Body of pancreas (tissue), 4 donors: ENCODE measurements at regions of chr7 and their contacts with region 1.

Region 1: DNA sequence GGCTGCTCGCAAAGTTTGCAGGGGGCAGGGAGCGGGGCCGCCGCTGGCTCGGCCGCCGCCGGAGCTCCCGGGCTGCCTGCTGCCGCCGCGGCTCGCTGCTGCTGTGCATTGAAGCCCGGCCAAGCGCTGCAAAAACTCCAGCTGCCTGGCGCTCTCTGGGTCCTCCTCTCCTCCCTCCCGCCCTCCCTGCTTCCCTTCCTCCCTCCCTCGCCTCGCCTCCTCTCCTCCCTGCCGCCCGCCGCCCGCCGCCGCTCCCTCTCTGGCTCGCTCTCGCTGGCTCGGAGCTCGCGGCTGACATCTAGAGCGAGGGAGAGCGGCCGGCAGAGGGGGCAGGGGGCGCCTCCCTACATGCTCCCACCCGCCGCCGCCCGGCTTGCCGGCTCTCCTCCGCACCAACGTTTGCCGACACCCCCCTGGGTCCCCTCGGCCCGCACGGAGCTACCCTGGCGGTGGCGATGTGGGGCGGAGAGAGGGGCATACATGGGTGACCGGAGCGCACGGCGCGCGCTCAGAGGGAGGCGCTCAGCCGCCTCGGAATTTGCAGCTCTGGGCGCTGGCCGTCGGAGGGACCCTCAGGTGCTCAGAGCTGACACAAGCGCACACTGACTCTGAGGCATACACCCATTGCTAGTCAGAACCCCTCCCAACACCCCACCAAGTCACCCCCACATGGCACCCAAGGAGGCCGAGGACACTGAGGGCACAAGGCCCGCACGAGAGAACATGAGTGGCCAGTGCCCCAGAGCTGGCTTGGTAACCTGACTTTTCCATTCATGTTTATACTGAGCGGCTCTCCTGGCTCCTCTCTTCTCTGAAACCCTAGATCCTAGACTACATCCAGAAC is 1.2 kb upstream of the PLXNA4 start:
- DNase-seq: peak; percentile 35 to 62 (median 46)
- ATAC-seq: peak; percentile 64
- H3K4me3 ChIP-seq: no peak overlapping the region
- H3K27ac ChIP-seq: no peak overlapping the region
- H3K4me1 ChIP-seq: peaks cover 17% of the 10 kb centered on the region
- H3K27me3 ChIP-seq: peaks cover 0 to 27% of the 10 kb centered on the region in 2 donors
- CTCF ChIP-seq: no peak
- POLR2A ChIP-seq: peak in 1 of 3 donors; percentile 12

Region 2: GRCh38 chr7:131945313-131945911 is 632.0 kb before region 1 on chr7:
- intact Hi-C with region 1: loop called (anchors 5 kb)
- DNase-seq: peak; percentile 29 to 62 (median 43)
- ATAC-seq: peak; percentile 58
- H3K4me3 ChIP-seq: no peak overlapping the region
- H3K27ac ChIP-seq: no peak overlapping the region
- H3K4me1 ChIP-seq: peaks cover 8% of the 10 kb centered on the region
- H3K27me3 ChIP-seq: peaks cover 0 to 10% of the 10 kb centered on the region in 2 donors
- CTCF ChIP-seq: peak; percentile 68 to 92 (median 79)
- POLR2A ChIP-seq: no peak

Region 3: DNA sequence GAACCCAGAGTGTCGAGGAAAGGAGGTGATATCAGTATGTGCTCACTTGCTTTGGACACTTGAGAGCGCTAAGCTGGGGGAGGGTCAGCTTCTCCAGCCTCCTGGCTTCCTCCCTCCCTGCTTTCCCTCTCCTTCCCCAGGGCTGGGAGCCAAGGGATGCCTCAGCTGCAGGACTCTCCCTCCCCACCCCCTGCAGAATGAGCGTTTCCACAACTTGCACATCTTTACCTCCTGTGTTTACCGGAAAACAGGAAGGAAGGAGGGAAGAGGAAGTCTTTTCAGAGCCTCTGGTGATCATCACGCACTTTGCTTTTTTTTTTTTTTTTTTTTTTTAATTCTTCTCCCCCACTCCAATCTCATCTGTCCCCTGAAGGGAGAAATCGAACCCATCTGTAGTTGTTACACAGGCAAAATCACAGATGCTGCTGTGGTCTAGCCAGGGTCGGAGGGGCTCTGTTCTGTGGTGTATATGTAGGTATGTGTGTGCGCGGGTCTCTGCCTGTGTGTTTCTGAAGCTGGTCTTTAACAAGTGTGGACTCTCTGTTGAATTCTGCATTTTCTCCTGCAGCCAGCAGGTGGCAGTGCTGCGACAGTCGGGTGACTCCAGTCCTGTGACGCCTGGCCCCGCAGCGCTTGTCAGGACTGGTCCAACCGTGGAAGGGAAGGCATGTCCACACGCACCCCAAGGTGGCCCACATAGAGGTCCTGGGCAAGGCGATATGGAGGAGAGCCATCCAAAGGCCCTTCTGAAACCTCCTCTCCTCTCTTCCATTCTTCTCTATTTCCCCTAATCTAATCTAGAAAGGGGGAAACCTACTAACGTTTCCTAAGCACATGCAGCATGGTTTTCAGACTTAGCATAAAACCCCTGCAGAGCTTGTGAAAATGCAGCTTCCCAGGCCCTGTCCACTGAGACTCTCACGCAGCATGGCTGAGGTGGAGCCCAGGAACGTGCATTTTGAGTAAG is 258.8 kb before region 1 on chr7:
- intact Hi-C with region 1: loop called (anchors 5 kb)
- DNase-seq: peak; percentile 83 to 88 (median 85)
- ATAC-seq: peak; percentile 87
- H3K4me3 ChIP-seq: no peak overlapping the region
- H3K27ac ChIP-seq: no peak overlapping the region
- H3K4me1 ChIP-seq: peaks cover 4% of the 10 kb centered on the region
- H3K27me3 ChIP-seq: no peaks in the 10 kb centered on the region
- CTCF ChIP-seq: peak; percentile 75 to 91 (median 89)
- POLR2A ChIP-seq: no peak